Psoas muscle (tissue), 8 donors: ENCODE measurements at regions of chr14 and their contacts with region 1.

Region 1: GRCh38 chr14:91286530-91286937 is 42.0 kb upstream of the GPR68 start:
- DNase-seq: peak; percentile 76 to 77
- ATAC-seq: peak; percentile 66 to 83 (median 75)
- H3K4me3 ChIP-seq: no peak overlapping the region
- H3K27ac ChIP-seq: no peak overlapping the region
- H3K4me1 ChIP-seq: no peaks in the 10 kb centered on the region
- H3K27me3 ChIP-seq: no peaks in the 10 kb centered on the region
- CTCF ChIP-seq: peak; percentile 87

Region 2: GRCh38 chr14:90903101-90903500 is 383.4 kb before region 1 on chr14:
- intact Hi-C with region 1: loop called (anchors 5 kb)
- DNase-seq: peak in 1 of 2 donors; percentile 26
- ATAC-seq: peak; percentile 58 to 94 (median 86)
- H3K4me3 ChIP-seq: no peak overlapping the region
- H3K27ac ChIP-seq: no peak overlapping the region
- H3K4me1 ChIP-seq: no peaks in the 10 kb centered on the region
- H3K27me3 ChIP-seq: no peaks in the 10 kb centered on the region
- CTCF ChIP-seq: peak; percentile 72